Activated CD8-positive, alpha-beta T cell treated with anti-CD3 and anti-CD28 coated beads for 36 hours (primary cell): ENCODE measurements at regions of chr2 and their contacts with region 1.

Region 1: GRCh38 chr2:86079981-86080911 is 25.4 kb downstream of the POLR1A start:
- DNase-seq: peak; percentile 87
- ATAC-seq: peak; percentile 78
- H3K4me3 Mint-ChIP-seq: no peak overlapping the region
- H3K27ac Mint-ChIP-seq: peak overlapping the region; percentile 80
- H3K4me1 Mint-ChIP-seq: peaks cover 25% of the 10 kb centered on the region
- H3K27me3 Mint-ChIP-seq: no peaks in the 10 kb centered on the region
- CTCF ChIP-seq: peak; percentile 75

Region 2: DNA sequence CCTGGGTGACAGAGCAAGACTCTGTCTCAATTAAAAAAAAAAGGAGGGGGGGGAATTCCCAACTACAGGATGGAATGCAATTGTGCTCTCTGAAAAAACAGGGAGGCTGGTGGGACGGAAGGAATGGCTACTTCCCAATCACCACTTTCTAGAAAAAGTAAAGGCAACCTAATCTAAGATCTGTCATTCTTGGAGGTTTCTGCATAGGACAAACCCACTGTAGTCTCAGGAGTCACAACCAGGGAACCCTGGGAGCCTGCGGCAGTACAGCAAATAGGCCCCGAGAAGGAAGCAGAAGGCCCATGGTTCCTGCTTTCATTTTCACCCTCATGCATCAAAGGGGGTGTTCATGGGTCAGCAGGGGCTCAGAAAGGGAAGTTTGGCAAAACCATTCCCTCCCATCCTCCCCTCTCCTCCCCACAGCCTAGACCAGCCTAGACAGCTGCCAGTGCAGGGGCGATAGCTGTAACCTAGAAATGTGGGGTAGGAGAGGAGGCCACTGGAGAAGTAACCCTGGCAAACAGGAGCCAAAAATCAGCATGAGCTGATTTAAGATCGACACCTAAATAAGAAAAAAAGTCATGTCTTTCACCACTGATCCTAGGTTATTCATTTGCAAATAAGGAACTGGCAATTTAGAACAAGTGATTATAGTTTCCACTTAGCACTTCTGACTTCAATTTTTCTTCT is 1247.3 kb before region 1 on chr2:
- CTCF ChIA-PET with region 1: no interaction called
- POLR2A ChIA-PET with region 1: no interaction called
- intact Hi-C with region 1: no loop called
- DNase-seq: peak; percentile 44
- ATAC-seq: peak; percentile 60
- H3K4me3 Mint-ChIP-seq: peak overlapping the region; percentile 54
- H3K27ac Mint-ChIP-seq: peak overlapping the region; percentile 87
- H3K4me1 Mint-ChIP-seq: peaks cover 39% of the 10 kb centered on the region
- H3K27me3 Mint-ChIP-seq: no peaks in the 10 kb centered on the region
- CTCF ChIP-seq: no peak

Region 3: GRCh38 chr2:86042256-86043168 is 37.7 kb before region 1 on chr2:
- CTCF ChIA-PET with region 1: interaction called, 19 read pairs
- POLR2A ChIA-PET with region 1: no interaction called
- intact Hi-C with region 1: no loop called
- DNase-seq: no peak
- ATAC-seq: no peak
- H3K4me3 Mint-ChIP-seq: no peak overlapping the region
- H3K27ac Mint-ChIP-seq: peak overlapping the region; percentile 63
- H3K4me1 Mint-ChIP-seq: peaks cover 49% of the 10 kb centered on the region
- H3K27me3 Mint-ChIP-seq: no peaks in the 10 kb centered on the region
- CTCF ChIP-seq: no peak

Region 4: DNA sequence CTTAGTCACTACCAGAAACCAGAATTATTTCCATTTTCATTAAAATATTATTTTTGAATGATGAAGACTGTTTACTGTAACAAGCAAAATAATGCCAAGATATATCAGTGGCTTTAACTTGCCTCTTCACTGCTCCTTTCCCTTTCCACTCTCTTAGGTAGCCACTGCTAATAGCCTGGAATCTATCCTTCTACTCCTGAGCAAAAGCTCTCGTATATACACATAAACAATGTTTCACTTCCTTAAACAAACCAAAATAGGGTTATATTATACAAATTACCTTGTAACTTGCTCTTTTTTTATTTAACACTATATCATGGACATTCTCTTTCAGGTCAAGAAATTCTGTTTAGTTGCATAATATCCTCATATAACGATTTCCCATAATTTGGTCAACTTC is 94.2 kb after region 1 on chr2:
- CTCF ChIA-PET with region 1: no interaction called
- POLR2A ChIA-PET with region 1: no interaction called
- intact Hi-C with region 1: no loop called
- DNase-seq: no peak
- ATAC-seq: no peak
- H3K4me3 Mint-ChIP-seq: no peak overlapping the region
- H3K27ac Mint-ChIP-seq: no peak overlapping the region
- H3K4me1 Mint-ChIP-seq: peaks cover 11% of the 10 kb centered on the region
- H3K27me3 Mint-ChIP-seq: no peaks in the 10 kb centered on the region
- CTCF ChIP-seq: no peak

Region 5: GRCh38 chr2:86487062-86487461 is 406.8 kb after region 1 on chr2:
- CTCF ChIA-PET with region 1: no interaction called
- POLR2A ChIA-PET with region 1: no interaction called
- intact Hi-C with region 1: no loop called
- DNase-seq: no peak
- ATAC-seq: no peak
- H3K4me3 Mint-ChIP-seq: no peak overlapping the region
- H3K27ac Mint-ChIP-seq: no peak overlapping the region
- H3K4me1 Mint-ChIP-seq: peaks cover 38% of the 10 kb centered on the region
- H3K27me3 Mint-ChIP-seq: no peaks in the 10 kb centered on the region
- CTCF ChIP-seq: no peak